Left cardiac atrium (tissue), 4 donors: ENCODE measurements at regions of chr2 and their contacts with region 1.

Region 1: GRCh38 chr2:200901459-200902072 is 12.4 kb downstream of the NIF3L1 start:
- DNase-seq: peak; percentile 56
- ATAC-seq: peak; percentile 84 to 85

Region 2: DNA sequence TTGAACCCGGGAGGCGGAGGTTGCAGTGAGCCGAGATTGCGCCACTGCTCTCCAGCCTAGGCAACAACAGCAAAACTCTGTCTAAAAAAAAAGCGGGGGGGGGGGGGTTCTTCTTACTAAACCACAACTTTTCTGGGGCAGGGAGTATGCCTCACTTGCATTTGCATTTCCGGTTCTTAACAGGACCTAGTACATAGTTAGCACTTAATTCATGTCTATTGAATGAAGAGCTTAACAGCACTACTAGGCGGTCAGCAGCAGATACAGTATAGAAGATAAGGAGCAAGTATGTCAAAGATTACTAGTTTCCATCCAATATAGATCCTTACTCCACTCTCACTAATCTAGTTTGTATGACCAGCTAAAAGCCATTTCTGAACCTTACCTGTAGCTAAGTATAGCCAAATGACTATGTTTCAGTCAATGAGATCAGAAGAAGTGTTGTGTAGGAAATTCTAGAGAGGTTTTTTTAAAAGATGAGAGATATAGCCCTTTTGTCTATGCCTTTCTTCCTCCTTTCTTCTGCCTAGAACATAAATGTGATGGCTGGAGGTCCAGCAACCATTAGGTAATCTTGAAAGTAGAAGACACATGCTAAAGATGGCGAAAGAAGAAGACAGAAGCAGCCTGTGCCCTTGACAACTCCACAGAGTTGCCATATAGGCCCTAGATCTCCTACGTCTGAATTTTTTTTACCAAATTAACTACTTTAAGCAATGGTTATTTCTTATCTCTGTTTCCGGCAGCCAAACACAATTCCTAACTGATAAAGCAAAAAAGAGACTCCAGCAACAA is 158.6 kb after region 1 on chr2:
- intact Hi-C with region 1: loop called in 1 of 2 experiments (anchors 10 kb)
- DNase-seq: no peak
- ATAC-seq: no peak

Region 3: GRCh38 chr2:201171259-201171814 is 269.8 kb after region 1 on chr2:
- intact Hi-C with region 1: loop called (anchors 5 kb)
- DNase-seq: no peak
- ATAC-seq: peak in 1 of 2 donors; percentile 13

Region 4: GRCh38 chr2:201285499-201285898 is 383.9 kb after region 1 on chr2:
- intact Hi-C with region 1: no loop called
- DNase-seq: no peak
- ATAC-seq: no peak